ENCODE measurements at regions of chr12 and their contacts with region 1.

Region 1: GRCh38 chr12:115354007-115354452 is 670.1 kb upstream of the TBX3 start:
- DNase-seq: peak; percentile 98
- H3K4me3 ChIP-seq: peak overlapping the region; percentile 80
- H3K27ac ChIP-seq: peak overlapping the region; percentile 95
- H3K4me1 ChIP-seq: peaks cover 31% of the 10 kb centered on the region
- H3K27me3 ChIP-seq: no peaks in the 10 kb centered on the region

Region 2: DNA sequence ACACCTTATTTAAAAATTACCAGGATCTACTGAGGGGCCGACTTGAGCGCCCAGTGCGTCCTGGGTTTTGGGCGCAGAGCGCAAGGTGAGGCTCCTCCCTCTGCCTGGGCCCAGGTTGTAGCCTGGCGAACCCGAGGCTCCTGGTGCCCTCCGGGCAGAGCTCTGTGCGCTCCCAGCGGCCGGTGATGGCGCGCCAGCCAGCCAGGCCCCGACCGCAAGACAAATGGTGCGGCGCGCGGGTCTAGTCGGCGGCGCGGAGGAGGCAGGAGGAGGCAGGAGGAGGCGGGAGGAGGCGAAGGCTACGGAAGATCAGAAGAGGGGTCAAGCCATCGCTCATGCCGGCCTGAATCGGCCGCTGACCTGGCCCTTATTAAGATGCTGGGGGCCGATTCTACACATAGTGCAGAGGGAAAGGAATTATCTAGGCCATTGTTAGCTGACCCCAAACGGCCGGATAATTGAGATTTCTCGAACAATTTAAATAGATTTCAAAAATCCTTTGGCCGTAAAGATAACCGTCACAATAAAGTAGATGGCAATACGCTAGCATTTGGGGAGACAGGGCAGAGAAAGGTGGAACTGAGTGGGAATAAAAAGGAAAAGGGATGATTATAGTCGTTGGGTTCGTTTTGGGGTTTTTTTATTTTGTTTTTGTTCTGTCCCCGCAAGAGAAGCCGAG is 950.9 kb before region 1 on chr12:
- in situ Hi-C with region 1: no loop called
- DNase-seq: peak; percentile 91
- H3K4me3 ChIP-seq: peak overlapping the region; percentile 91
- H3K27ac ChIP-seq: peak overlapping the region; percentile 95
- H3K4me1 ChIP-seq: peaks cover 33% of the 10 kb centered on the region
- H3K27me3 ChIP-seq: no peaks in the 10 kb centered on the region

Region 3: DNA sequence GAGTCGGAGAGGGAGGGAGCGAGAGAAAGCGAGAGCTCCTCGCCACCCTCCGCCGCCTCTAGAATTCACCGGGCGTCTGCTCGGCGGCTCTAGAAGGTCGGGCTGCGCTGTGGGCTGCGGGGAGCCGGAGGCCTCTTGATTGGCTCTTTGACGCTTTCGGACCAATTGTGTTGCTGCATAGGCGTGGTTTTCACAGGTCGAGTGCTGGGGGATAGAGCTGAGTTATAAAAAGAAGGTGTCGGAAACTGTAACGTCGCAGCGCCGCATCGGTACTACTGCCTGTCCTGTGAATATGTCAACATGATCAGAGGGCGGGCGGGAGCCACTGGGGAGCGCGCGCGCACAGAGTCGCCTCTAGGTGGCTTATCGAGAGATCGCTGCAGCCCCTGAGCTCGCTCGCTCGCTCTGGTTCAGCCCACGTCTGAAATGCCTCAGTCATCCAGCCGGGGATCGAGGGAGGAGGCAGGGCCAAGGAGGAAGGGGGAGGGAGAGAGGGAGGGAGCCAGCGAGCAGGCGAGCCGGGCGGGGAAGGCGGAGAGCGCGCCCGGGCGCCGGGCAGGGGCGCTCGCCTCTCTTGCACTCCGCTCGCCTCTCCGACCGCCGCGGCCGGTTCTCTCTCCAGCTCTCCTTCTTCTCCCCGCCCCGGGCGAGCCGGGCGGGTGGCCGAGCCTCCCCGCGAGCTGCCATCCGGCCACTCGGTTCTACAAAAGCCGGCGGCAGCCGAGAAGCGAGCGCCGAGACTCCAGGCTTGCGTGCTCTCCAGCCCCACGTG is 669.7 kb before region 1 on chr12 and contains the start of gene TBX3:
- in situ Hi-C with region 1: loop called (anchors 25 kb)
- DNase-seq: peak; percentile 100
- H3K4me3 ChIP-seq: peak within 1 kb of the TSS; percentile 98
- H3K27ac ChIP-seq: peak within 1 kb of the TSS; percentile 97
- H3K4me1 ChIP-seq: peaks cover 6% of the 10 kb centered on the region
- H3K27me3 ChIP-seq: no peaks in the 10 kb centered on the region
- total RNA-seq, gene TBX3: 25.1 and 34.0 TPM in 2 replicates

Region 4: DNA sequence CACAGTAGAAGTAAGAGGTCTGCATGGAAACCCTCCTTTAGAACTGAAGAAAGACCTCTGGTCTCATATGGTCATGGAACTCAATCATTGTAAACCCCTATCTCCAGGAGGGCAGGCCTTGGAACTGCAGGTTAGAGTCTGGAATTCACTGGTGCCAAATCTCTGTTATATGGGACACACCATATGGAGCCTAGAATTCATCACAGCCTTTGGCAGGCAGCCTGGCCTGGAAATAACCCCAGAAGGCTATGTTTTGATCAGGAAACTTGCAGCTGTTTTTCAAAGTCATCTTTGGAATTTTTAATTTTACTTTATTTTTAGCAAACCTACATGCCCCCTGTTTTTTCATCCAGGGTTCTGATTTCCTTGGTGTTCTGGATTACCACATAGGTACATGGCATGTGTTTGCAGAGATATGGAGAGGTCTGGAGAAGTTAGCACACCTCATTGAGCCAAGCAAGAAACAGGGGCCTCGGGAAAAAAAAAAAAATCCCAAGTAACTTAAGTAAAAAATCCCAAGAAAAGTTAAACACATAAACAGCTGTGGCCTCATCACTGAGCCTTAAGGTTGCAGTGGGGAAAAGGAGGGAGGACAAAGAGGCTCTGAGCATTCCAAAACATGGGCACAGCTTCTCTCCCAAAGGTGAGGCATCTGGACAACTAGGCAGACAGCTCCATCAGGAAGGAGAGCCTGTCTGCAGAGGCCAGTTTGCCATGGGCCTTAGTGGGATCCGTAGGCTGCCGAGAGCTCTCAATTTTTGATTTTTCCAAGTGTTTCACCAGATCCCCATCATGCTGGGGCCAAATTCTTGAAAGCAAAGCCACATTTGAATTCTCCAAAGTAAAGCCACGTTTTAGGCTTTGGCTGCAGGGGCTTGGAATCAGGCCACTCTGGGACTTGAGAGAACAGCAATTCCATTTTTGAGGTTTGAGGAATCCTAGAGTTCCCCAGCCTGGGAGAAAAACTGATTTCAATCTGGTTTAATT is 330.5 kb before region 1 on chr12:
- in situ Hi-C with region 1: no loop called
- DNase-seq: peak; percentile 32
- H3K4me3 ChIP-seq: no peak overlapping the region
- H3K27ac ChIP-seq: no peak overlapping the region
- H3K4me1 ChIP-seq: no peaks in the 10 kb centered on the region
- H3K27me3 ChIP-seq: no peaks in the 10 kb centered on the region

Region 5: DNA sequence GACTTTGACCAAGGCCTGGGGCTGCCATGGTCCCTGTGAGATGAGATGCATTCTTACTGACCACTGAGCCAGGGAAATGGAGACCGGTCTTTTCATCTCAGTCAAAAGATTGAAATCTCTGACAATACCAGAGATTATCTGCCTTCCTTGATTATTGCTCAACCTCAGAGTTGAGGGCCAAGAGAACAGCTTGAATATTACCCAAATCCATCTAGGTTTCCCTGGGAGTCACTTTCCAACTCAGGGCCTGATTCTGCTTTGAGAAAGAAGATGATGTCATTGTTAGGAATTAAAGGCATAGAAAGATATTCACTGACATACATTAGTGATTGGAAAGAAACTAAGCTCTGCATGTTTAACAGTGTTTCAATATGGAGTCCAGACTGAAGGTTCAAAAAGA is 154.2 kb before region 1 on chr12:
- in situ Hi-C with region 1: no loop called
- DNase-seq: peak; percentile 72
- H3K4me3 ChIP-seq: no peak overlapping the region
- H3K27ac ChIP-seq: no peak overlapping the region
- H3K4me1 ChIP-seq: peaks cover 9% of the 10 kb centered on the region; the same call in 1 of the 2 replicates
- H3K27me3 ChIP-seq: no peaks in the 10 kb centered on the region

Measured in GM23248 (cell line).